Activated T-helper 1 cell treated with anti-CD3 and anti-CD28 coated beads, Interleukin-12 subunit alpha, Interleukin-12 subunit beta, Interleukin-2, Interleukin-4 antibody, amounts not matched to agents 30 ng/mL and 10 ng/mL and 1 ng/mL, durations not matched to agents 14 hours and 24 hours and 36 hours (primary cell): ENCODE measurements at regions of chr15 and their contacts with region 1.

Region 1: GRCh38 chr15:81296673-81297072 is 27.3 kb downstream of the STARD5 start:
- DNase-seq: peak; percentile 77
- H3K4me3 Mint-ChIP-seq: peak overlapping the region; percentile 97
- H3K27ac Mint-ChIP-seq: peak overlapping the region; percentile 94
- H3K4me1 Mint-ChIP-seq: peaks cover 95% of the 10 kb centered on the region
- H3K27me3 Mint-ChIP-seq: no peaks in the 10 kb centered on the region

Region 2: DNA sequence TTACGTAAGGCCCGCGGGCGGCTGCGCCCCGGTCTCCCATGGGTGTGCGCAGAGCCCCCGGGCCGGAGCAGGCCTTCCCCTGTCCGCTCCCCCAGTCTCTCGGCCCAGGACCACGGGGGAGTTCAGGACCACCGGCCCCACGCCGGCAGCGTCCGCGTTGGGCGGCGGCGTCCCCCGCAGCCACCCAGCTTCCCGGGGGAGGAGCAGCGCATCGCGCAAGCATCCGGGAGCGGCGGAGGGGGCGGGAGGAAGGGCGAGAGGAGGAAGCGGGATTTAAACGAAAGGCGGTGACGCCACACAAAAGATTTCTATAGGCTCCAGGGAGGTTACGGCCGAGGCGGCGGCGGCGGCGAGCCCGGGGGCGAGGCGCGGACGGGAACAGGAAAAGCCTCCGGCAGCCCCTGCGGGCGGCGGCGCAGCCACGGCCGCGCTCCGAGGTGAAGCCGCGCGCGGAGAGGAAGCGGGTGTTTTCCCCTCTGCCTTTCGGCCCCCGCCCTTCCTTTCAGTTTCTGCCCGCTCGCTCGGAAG is 296.0 kb before region 1 on chr15 and contains the start of gene TLNRD1:
- intact Hi-C with region 1: loop called (anchors 2 kb)
- DNase-seq: peak; percentile 89
- H3K4me3 Mint-ChIP-seq: peak within 1 kb of the TSS; percentile 97
- H3K27ac Mint-ChIP-seq: peak within 1 kb of the TSS; percentile 98
- H3K4me1 Mint-ChIP-seq: peaks cover 62% of the 10 kb centered on the region
- H3K27me3 Mint-ChIP-seq: peaks cover 2% of the 10 kb centered on the region
- total RNA-seq, gene TLNRD1: 30.2 and 30.8 TPM in 2 replicates

Region 3: DNA sequence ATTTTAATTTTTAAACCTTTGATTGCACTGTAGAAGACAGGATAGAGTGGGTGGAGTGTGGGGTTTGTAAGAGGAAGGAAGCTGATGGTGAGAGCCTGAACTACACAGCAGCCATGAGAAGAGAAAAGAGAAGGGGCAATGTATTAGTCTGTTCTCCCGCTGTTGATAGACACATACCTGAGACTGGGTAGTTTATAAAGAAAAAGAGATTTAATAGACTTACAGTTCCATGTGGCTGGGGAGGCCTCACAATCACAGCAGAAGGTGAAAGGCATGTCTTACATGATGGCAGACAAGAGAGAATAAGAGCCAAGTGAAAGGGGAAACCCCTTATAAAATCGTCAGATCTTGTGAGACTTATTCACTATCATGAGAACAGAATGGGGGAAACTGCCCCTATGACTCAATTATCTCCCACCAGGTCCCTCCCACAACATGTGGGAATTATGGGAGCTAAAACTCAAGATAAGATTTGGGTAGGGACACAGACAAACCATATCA is 10.0 kb before region 1 on chr15:
- intact Hi-C with region 1: loop called (anchors 1 kb)
- DNase-seq: no peak
- H3K4me3 Mint-ChIP-seq: peak overlapping the region; percentile 34
- H3K27ac Mint-ChIP-seq: peak overlapping the region; percentile 64
- H3K4me1 Mint-ChIP-seq: peaks cover 46% of the 10 kb centered on the region
- H3K27me3 Mint-ChIP-seq: no peaks in the 10 kb centered on the region